ENCODE measurements at regions of chr1 and their contacts with region 1.

Region 1: GRCh38 chr1:200302192-200302920 is 107.5 kb downstream of the ZNF281 start:
- DNase-seq: peak; percentile 69
- CTCF ChIP-seq: peak; percentile 8

Region 2: DNA sequence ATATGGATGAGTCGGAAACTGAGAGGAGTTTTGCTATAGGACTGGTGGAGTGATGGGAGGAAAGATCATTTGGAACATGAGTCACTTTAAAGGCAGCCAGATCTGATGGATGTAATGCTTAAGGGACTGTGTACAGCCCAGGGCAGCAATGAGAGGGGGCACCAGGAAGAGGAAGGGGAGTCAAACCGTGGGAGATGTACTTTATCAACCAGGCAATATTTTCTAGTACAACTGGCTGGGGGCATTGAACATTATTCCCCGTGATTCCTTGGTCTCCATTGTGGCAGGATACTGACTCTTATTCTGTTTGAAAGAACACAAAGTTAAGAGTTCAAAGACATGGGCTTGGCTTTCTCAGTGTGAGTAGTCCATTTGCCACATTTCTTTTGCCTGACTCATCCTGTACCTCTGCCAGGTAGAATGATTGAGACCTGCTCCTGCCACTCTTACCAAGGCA is 543.1 kb before region 1 on chr1:
- CTCF ChIA-PET with region 1: no interaction called
- POLR2A ChIA-PET with region 1: no interaction called
- DNase-seq: no peak
- CTCF ChIP-seq: no peak

Region 3: DNA sequence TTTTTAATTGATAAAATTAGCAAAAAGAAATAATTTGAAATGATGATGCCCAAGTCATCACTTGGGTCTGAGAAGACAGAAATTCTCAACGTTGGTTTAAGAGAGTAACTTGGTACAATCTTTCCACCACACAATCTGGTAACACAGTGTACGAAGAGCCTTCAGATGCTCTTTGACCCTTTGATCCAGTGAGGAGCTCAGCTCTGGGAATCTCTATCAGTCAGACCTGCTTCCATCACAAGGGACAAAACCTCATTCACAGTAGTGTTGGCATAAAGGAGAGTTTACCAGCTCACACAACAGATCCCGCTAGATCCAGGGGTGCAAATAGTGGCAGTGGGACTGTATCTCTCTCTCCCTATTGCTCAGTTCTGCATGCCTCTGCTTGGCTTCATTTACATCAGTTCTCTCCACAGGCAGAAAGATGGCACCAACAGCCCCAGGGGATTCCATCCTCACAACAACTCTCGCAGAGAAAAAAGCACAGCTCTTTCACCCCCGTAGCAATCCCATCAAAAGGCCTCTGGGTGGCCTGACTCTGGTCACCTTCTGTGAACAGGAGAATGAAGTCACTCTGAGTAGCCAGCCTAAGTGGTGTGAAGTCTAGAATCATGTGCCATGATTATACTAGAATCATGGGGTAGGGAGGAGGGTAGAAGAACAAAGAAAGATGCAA is 12.2 kb before region 1 on chr1:
- CTCF ChIA-PET with region 1: interaction called, 16 read pairs
- POLR2A ChIA-PET with region 1: no interaction called
- DNase-seq: no peak
- CTCF ChIP-seq: no peak

Region 4: DNA sequence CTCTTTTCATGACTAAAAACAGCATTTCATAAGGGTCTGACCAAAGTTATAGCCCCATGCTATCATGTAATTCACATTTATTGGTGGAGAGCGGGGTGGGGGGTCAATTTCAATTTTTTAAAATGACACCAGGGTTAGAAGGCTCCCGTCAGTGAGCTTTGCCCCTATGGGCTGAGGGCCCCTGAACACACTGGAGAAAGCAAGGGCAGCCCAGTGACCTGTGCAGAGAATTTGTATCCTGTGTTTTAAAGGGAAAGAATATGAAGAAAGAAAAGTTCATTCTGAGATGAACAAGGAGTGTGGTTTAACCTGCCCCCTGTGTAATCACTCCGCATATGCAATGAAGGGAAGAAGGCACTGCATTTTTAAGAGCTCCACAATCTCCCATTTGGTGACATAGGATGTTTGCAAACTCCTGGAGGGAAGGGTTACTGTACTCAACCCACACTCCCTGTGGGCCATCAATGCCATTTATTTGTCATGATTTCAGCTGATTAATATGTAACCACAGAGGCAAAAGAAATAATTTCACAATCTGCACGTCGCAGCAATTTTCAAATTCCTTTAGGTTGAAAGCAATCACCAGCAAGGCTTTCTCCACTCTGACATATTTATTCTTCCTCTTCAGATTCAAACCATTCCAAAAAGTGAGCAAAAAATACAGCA is 11.9 kb after region 1 on chr1:
- CTCF ChIA-PET with region 1: interaction called, 11 read pairs
- POLR2A ChIA-PET with region 1: no interaction called
- DNase-seq: no peak
- CTCF ChIP-seq: no peak

Measured in GM10248 (cell line).